A549 (cell line): ENCODE measurements at regions of chr11 and their contacts with region 1.

Region 1: GRCh38 chr11:119084663-119085436 is at the start of gene HMBS:
- DNase-seq: peak; percentile 78 to 92
- ATAC-seq: peak; percentile 93 to 96
- H3K4me3 ChIP-seq: peak within 1 kb of the TSS; percentile 81
- H3K27ac ChIP-seq: peak within 1 kb of the TSS; percentile 88 to 96
- H3K4me1 ChIP-seq: peaks cover 22% of the 10 kb centered on the region
- CTCF ChIP-seq: no peak
- EP300 ChIP-seq: no peak
- POLR2A ChIP-seq: peak; percentile 75
- RAD21 ChIP-seq: no peak
- polyA plus RNA-seq, gene HMBS: 62.2 and 77.6 TPM in 2 replicates

Region 2: GRCh38 chr11:118856314-118856713 is 228.5 kb before region 1 on chr11:
- CTCF ChIA-PET with region 1: no interaction called
- POLR2A ChIA-PET with region 1: no interaction called
- DNase-seq: no peak
- ATAC-seq: no peak
- H3K4me3 ChIP-seq: no peak overlapping the region
- H3K27ac ChIP-seq: no peak overlapping the region
- H3K4me1 ChIP-seq: no peaks in the 10 kb centered on the region
- CTCF ChIP-seq: no peak
- EP300 ChIP-seq: no peak
- POLR2A ChIP-seq: no peak
- RAD21 ChIP-seq: no peak

Region 3: GRCh38 chr11:119018074-119018938 is 66.5 kb before region 1 on chr11 and contains the starts of genes RPS25 and TRAPPC4:
- CTCF ChIA-PET with region 1: no interaction called
- POLR2A ChIA-PET with region 1: interaction called, 11 read pairs
- DNase-seq: peak; percentile 84 to 95
- ATAC-seq: peak; percentile 94 to 97
- H3K4me3 ChIP-seq: peak within 1 kb of the TSS; percentile 72
- H3K27ac ChIP-seq: peak within 1 kb of the TSS; percentile 95 to 97
- H3K4me1 ChIP-seq: peaks cover 40% of the 10 kb centered on the region
- CTCF ChIP-seq: no peak
- EP300 ChIP-seq: no peak
- POLR2A ChIP-seq: peak; percentile 60
- RAD21 ChIP-seq: no peak
- polyA plus RNA-seq, gene RPS25: 644 and 844 TPM in 2 replicates
- polyA plus RNA-seq, gene TRAPPC4: 77.7 and 90.0 TPM in 2 replicates

Region 4: GRCh38 chr11:119038884-119039283 is 46.0 kb before region 1 on chr11:
- CTCF ChIA-PET with region 1: no interaction called
- POLR2A ChIA-PET with region 1: no interaction called
- DNase-seq: no peak
- ATAC-seq: no peak
- H3K4me3 ChIP-seq: no peak overlapping the region
- H3K27ac ChIP-seq: no peak overlapping the region
- H3K4me1 ChIP-seq: no peaks in the 10 kb centered on the region
- CTCF ChIP-seq: no peak
- EP300 ChIP-seq: no peak
- POLR2A ChIP-seq: no peak
- RAD21 ChIP-seq: no peak

Region 5: DNA sequence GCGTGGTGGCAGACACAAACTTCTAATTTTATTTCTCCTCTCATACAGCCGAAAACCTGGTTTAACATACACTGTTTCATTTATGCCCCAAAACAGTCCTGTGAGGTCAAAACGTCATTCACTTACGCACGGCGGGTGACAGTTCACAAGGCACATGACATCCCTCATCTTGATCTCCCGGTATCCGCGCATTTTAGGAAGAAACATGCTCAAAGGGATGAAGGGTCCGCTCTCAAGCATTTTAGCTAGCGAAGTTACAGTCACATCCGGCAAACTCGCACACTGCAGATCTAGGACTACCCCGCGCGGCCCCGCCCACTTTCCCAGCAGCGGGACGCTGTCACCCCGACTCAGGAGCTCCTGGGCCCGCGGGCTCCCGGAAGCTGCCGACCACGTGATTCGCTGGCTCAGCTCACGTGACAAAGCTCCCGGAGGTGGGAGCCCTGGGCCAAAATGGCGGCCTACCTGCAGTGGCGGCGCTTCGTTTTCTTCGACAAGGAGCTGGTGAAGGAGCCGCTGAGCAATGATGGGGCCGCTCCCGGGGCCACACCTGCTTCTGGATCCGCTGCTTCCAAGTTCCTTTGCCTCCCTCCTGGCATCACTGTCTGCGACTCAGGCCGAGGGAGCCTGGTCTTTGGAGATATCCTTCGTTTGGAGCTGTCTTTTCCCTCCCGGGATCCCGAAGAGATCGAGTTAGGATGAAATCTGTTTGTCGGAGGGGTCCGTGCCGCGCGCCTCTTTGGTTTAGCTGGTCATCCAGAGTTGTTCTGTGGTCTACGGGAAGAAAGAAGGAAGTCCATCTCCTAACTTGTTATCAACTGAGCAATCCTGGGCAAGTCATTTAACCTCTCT is 17.3 kb before region 1 on chr11 and contains the start of gene VPS11:
- CTCF ChIA-PET with region 1: interaction called, 4 read pairs
- POLR2A ChIA-PET with region 1: interaction called, 33 read pairs
- DNase-seq: peak; percentile 93 to 94
- ATAC-seq: peak; percentile 94 to 97
- H3K4me3 ChIP-seq: peak within 1 kb of the TSS; percentile 98
- H3K27ac ChIP-seq: peak within 1 kb of the TSS; percentile 87 to 95
- H3K4me1 ChIP-seq: peaks cover 5% of the 10 kb centered on the region
- CTCF ChIP-seq: no peak
- EP300 ChIP-seq: no peak
- POLR2A ChIP-seq: peak; percentile 55
- RAD21 ChIP-seq: no peak
- polyA plus RNA-seq, gene VPS11: 4.6 and 11.3 TPM in 2 replicates

Region 6: DNA sequence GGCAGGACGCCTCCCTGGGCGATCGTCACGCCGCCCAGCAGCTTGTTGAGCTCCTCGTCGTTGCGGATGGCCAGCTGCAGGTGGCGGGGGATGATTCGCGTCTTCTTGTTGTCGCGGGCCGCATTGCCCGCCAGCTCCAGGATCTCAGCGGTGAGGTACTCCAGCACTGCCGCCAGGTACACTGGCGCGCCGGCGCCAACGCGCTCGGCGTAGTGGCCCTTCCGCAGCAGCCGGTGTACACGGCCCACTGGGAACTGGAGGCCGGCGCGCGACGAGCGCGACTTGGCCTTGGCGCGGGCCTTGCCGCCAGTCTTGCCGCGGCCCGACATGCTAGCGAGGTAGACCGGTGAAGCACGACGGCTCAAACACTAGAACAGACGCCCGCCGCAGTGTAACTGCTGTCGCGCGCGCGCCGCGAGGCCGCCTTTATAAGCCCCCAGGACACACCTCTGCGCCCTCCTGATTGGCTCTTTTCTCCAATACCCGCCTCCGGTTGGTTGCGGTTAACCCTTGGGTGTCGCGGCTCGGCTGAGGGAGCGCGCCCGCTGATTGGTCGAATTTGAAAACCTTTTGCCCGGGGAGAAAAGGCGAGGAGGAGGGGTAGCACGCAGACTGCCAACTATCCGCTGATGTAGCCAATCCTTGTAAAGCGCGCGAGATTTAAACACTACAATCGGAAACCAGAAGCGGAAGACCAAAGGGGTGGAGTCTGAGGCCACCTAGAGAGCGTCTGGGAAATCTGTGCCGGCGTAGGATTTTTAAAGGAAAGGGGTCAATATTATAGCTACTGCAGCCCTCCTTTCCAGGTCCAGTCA is 10.4 kb after region 1 on chr11:
- CTCF ChIA-PET with region 1: interaction called, 21 read pairs
- POLR2A ChIA-PET with region 1: interaction called, 31 read pairs
- DNase-seq: peak; percentile 93 to 99
- ATAC-seq: peak; percentile 72 to 88
- H3K4me3 ChIP-seq: peak overlapping the region; percentile 68
- H3K27ac ChIP-seq: peak overlapping the region; percentile 89 to 100
- H3K4me1 ChIP-seq: peaks cover 35% of the 10 kb centered on the region
- CTCF ChIP-seq: no peak; the same call in 1 of the 3 replicates
- EP300 ChIP-seq: no peak
- POLR2A ChIP-seq: peak; percentile 99
- RAD21 ChIP-seq: no peak

Region 7: GRCh38 chr11:119101759-119102423 is 17.0 kb after region 1 on chr11 and contains the start of gene DPAGT1:
- CTCF ChIA-PET with region 1: interaction called, 3 read pairs
- POLR2A ChIA-PET with region 1: interaction called, 27 read pairs
- DNase-seq: peak; percentile 74 to 98
- ATAC-seq: peak; percentile 90 to 92
- H3K4me3 ChIP-seq: peak within 1 kb of the TSS; percentile 78
- H3K27ac ChIP-seq: peak within 1 kb of the TSS; percentile 90 to 98
- H3K4me1 ChIP-seq: peaks cover 26% of the 10 kb centered on the region
- CTCF ChIP-seq: no peak
- EP300 ChIP-seq: no peak; a peak in 1 of 5 replicates
- POLR2A ChIP-seq: peak; percentile 34; the same call in 1 of the 2 replicates
- RAD21 ChIP-seq: no peak
- polyA plus RNA-seq, gene DPAGT1: 81.4 and 86.9 TPM in 2 replicates

Region 8: DNA sequence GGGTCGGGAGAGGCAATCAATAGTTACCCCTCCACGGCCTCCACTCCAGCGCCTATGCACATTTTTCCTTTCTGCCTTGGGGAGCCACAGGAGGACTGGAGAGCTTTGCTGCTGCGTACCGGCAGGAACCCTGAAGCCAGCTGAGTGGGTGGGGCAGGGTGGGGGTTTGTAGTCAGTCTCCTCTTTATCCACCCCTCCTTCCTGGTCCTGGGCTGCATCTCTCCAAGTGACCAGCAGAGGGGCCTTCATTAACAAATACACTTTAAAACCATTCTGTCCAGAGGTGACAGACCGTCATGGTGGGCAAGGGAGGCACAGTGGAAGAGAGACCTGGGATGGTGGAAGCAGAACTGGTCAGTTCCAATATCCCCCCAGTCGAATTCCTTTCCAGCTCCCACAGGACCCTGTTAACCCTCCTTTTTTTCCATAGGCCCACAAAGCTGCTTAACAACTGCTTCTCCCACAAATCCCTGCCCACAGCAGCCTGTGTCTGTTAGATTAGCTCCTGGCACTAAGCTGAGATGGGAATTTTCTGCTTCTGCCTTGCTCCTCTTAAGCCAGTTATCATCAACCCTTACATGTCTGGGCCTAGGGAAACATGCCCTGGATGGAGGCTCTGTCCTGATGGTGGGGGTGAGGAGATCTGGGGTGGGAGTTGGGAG is 60.1 kb after region 1 on chr11:
- CTCF ChIA-PET with region 1: no interaction called
- POLR2A ChIA-PET with region 1: no interaction called
- DNase-seq: peak; percentile 81 to 90
- ATAC-seq: peak; percentile 90 to 93
- H3K4me3 ChIP-seq: no peak overlapping the region
- H3K27ac ChIP-seq: peak overlapping the region; percentile 45 to 60; a peak in 2 of 6 replicates
- H3K4me1 ChIP-seq: 0 out of 3 replicates have a peak, but pooled peaks cover 4% of the 10 kb centered on the region
- CTCF ChIP-seq: peak; percentile 44
- EP300 ChIP-seq: no peak
- POLR2A ChIP-seq: no peak
- RAD21 ChIP-seq: peak; percentile 37 to 41; a peak in 3 of 5 replicates

Region 9: GRCh38 chr11:119525180-119525866 is 440.5 kb after region 1 on chr11:
- CTCF ChIA-PET with region 1: no interaction called
- POLR2A ChIA-PET with region 1: no interaction called
- DNase-seq: no peak
- ATAC-seq: no peak
- H3K4me3 ChIP-seq: no peak overlapping the region
- H3K27ac ChIP-seq: no peak overlapping the region
- H3K4me1 ChIP-seq: no peaks in the 10 kb centered on the region
- CTCF ChIP-seq: no peak
- EP300 ChIP-seq: no peak
- POLR2A ChIP-seq: no peak
- RAD21 ChIP-seq: no peak